ENCODE measurements at regions of chr10 and their contacts with region 1.

Region 1: DNA sequence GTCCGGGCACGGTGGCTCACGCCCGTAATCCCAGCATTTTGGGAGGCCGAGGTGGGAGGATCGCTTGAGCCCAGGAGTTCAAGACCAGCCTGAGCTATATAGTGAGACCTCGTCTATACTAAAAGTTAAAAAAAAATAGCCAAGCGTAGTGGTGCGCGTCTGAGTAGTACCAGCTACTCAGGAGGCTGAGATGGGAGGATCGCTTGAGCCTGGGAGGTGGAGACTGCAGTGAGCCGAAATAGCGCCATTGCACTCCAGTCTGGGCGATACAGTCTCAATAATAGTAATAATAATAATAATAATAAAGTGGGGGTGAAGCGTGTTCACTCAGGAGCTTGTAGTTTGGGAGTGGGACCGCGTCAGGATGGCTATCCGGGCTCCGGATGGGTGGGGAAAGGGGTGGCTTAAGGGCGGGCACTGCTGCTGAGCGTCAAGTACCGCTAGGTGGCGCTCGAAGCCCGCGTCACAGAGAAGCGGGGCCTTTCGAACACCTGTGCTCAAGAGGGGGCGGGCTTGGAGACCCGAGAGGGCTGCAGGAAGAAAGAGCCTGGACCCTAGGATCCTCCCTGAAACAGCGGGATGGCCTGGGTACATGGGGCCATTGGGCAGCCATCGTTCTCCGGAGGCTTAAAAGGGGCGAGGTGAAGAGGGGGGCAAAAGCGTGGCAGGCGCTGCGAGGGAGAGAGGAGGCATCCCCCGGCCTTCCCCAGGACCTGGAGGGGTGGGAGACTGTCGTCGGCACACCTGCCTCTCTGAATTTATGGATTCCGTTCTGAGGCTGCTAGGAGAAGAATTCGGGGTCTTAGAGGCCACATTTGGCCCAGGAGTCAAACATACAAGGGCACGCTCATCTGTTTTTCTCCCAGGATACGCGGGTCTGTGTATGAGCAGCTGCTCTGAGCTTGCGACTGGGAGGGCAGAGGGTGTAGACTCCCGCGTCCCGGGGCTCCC is 14.5 kb downstream of the LBX1 start:
- DNase-seq: peak; percentile 38 to 74
- ATAC-seq: peak; percentile 77

Region 2: GRCh38 chr10:101467286-101467770 is 252.6 kb after region 1 on chr10:
- intact Hi-C with region 1: loop called in 1 of 2 experiments (anchors 10 kb)
- DNase-seq: peak in 1 of 2 donors; percentile 25
- ATAC-seq: peak; percentile 97

Region 3: DNA sequence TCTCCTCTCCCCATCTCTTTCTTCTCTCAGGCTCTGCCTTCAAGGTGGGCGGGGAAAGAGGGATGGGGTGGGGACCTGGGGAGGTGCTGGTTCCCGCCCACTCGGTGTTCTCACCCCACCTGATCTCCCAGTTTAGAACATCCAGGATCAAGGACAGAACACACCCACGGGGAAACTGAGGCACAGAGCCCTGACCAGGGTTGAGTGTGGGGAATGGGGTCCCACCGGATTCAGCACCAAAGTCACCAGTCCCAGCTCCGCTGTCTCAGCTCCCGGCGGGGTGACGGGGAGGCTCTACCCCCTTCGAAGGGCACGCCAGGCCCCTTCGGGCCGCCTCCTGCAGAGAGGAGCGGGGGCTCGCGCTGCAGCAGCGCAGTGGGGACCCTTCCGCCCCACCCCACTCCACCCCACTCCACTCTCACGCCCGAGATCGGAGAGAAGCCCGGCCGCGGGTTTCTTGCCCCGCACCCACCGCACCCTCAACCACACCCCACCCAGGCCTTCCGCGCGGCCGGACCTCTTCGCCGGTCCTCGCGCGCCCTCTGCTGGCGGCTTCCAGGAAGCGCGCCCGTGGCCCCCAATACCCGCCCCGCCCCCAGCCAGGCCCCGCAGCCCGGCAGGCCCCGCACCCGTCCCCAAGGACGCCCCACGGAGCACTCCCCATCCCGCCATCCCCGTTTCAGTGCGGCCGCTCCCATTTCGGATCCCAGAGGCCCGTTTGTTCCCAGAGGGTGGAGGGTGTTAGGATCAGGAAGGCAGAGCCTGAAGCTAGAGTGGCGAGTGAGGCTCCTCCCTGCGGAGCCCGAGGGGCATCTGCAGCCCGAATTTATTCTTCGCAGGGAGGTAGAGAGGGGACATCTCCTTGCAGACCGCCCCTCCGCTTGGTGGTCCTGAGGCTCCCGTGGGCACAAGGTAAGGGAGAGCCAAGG is 355.4 kb after region 1 on chr10:
- intact Hi-C with region 1: loop called (anchors 5 kb)
- DNase-seq: peak; percentile 68 to 91
- ATAC-seq: peak; percentile 92

Region 4: GRCh38 chr10:101782811-101783735 is 568.4 kb after region 1 on chr10 and contains the start of gene NPM3:
- intact Hi-C with region 1: loop called in 1 of 2 experiments (anchors 10 kb)
- DNase-seq: peak; percentile 86 to 90
- ATAC-seq: peak; percentile 57
- total RNA-seq, gene NPM3: 17.9 to 22.1 TPM